ENCODE measurements at regions of chr22 and their contacts with region 1.

Region 1: DNA sequence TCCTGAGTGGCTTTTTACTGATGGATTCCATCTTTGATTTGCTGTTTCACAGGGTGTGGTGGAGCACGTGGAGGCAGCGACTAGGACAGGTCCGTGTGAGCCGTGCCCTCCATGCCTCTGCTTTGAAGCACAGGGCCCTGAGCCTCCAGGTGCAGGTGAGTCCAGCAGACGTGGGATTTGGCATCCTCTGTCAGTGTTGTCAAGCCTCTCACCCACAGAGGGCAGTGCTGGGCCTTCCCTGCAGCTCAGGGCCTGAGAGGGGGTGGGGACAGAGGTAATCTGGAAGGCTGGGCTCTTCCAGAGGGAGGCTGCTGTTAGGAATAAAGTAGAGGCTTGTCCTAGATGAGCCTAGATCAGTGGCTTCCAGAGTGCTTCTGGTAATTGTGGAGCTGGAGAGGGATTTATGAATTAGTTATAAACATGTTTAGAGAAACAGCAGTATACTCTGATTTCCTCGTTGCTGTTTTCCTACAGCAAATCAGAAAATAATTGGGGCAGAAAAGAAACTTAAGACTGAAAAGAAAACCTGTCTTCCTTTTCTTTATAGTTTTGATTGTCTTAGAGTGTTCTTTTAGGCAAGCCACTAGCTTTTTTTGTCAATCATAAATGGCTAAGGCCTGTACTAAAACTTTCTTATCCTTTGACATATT is 65.0 kb downstream of the SFI1 start:
- DNase-seq: peak; percentile 60 to 83
- H3K4me3 ChIP-seq: no peak overlapping the region
- H3K27ac ChIP-seq: peak overlapping the region in 1 of 2 donors; percentile 17
- H3K4me1 ChIP-seq: no peaks in the 10 kb centered on the region
- H3K27me3 ChIP-seq: no peaks in the 10 kb centered on the region
- CTCF ChIP-seq: peak in 2 of 3 donors; percentile 64 to 83
- POLR2A ChIP-seq: no peak

Region 2: GRCh38 chr22:31509061-31509762 is 52.2 kb before region 1 on chr22:
- intact Hi-C with region 1: no loop called
- DNase-seq: no peak
- H3K4me3 ChIP-seq: no peak overlapping the region
- H3K27ac ChIP-seq: no peak overlapping the region
- H3K4me1 ChIP-seq: no peaks in the 10 kb centered on the region
- H3K27me3 ChIP-seq: no peaks in the 10 kb centered on the region
- CTCF ChIP-seq: no peak
- POLR2A ChIP-seq: no peak

Region 3: GRCh38 chr22:31630331-31631329 is 69.3 kb after region 1 on chr22:
- intact Hi-C with region 1: loop called (anchors 2 kb)
- DNase-seq: peak; percentile 56 to 65
- H3K4me3 ChIP-seq: peak overlapping the region; percentile 81 to 88 (median 86)
- H3K27ac ChIP-seq: peak overlapping the region; percentile 81 to 94
- H3K4me1 ChIP-seq: peaks cover 8 to 15% of the 10 kb centered on the region in 2 donors
- H3K27me3 ChIP-seq: no peaks in the 10 kb centered on the region
- CTCF ChIP-seq: no peak
- POLR2A ChIP-seq: no peak